ENCODE measurements at regions of chr4 and their contacts with region 1.

Region 1: GRCh38 chr4:33467291-33467690 is 2747.1 kb downstream of the PCDH7 start:
- DNase-seq: no peak
- H3K4me3 ChIP-seq: no peak overlapping the region
- H3K27ac ChIP-seq: no peak overlapping the region
- H3K4me1 ChIP-seq: no peaks in the 10 kb centered on the region
- H3K27me3 ChIP-seq: no peaks in the 10 kb centered on the region
- CTCF ChIP-seq: no peak
- EP300 ChIP-seq: no peak
- POLR2A ChIP-seq: no peak

Region 2: DNA sequence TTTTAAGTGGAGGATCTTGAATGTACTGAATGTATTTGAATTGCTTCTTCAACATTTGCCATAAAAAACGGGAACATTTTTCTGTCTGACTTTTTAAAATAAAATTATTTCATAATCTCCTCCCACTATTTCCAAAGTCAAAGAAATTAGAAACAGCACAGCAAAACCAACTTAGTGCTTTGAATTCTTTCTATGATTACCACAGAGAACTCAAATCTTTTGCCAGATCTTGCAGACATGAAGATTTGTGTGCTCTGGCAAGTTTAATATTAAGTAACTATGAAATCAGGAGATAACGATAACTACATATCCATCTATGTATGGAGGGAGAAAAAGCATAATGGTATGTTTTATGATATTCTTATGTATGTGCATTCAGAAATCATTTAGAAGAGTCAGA is 1765.0 kb before region 1 on chr4:
- intact Hi-C with region 1: loop called in 1 of 4 experiments (anchors 5 kb)
- DNase-seq: no peak
- H3K4me3 ChIP-seq: no peak overlapping the region
- H3K27ac ChIP-seq: no peak overlapping the region
- H3K4me1 ChIP-seq: no peaks in the 10 kb centered on the region
- H3K27me3 ChIP-seq: no peaks in the 10 kb centered on the region
- CTCF ChIP-seq: no peak
- EP300 ChIP-seq: no peak
- POLR2A ChIP-seq: no peak

Region 3: GRCh38 chr4:33386761-33387160 is 80.5 kb before region 1 on chr4:
- intact Hi-C with region 1: no loop called
- DNase-seq: no peak
- H3K4me3 ChIP-seq: no peak overlapping the region
- H3K27ac ChIP-seq: no peak overlapping the region
- H3K4me1 ChIP-seq: no peaks in the 10 kb centered on the region
- H3K27me3 ChIP-seq: no peaks in the 10 kb centered on the region
- CTCF ChIP-seq: no peak
- EP300 ChIP-seq: no peak
- POLR2A ChIP-seq: no peak

Region 4: GRCh38 chr4:33518852-33519251 is 51.6 kb after region 1 on chr4:
- intact Hi-C with region 1: no loop called
- DNase-seq: no peak
- H3K4me3 ChIP-seq: no peak overlapping the region
- H3K27ac ChIP-seq: no peak overlapping the region
- H3K4me1 ChIP-seq: no peaks in the 10 kb centered on the region
- H3K27me3 ChIP-seq: no peaks in the 10 kb centered on the region
- CTCF ChIP-seq: no peak
- EP300 ChIP-seq: no peak
- POLR2A ChIP-seq: no peak

Region 5: GRCh38 chr4:33551244-33551643 is 84.0 kb after region 1 on chr4:
- intact Hi-C with region 1: no loop called
- DNase-seq: no peak
- H3K4me3 ChIP-seq: no peak overlapping the region
- H3K27ac ChIP-seq: no peak overlapping the region
- H3K4me1 ChIP-seq: no peaks in the 10 kb centered on the region
- H3K27me3 ChIP-seq: no peaks in the 10 kb centered on the region
- CTCF ChIP-seq: no peak
- EP300 ChIP-seq: no peak
- POLR2A ChIP-seq: no peak

Measured in ovary (tissue), 10 donors.